ENCODE measurements at regions of chr4 and their contacts with region 1.

Region 1: GRCh38 chr4:40199999-40200874 is 3.4 kb downstream of the RHOH start:
- DNase-seq: peak; percentile 73
- H3K4me3 ChIP-seq: peak overlapping the region; percentile 78
- H3K27ac ChIP-seq: peak overlapping the region; percentile 97
- H3K4me1 ChIP-seq: peaks cover 50% of the 10 kb centered on the region
- H3K27me3 ChIP-seq: no peaks in the 10 kb centered on the region
- CTCF ChIP-seq: no peak

Region 2: DNA sequence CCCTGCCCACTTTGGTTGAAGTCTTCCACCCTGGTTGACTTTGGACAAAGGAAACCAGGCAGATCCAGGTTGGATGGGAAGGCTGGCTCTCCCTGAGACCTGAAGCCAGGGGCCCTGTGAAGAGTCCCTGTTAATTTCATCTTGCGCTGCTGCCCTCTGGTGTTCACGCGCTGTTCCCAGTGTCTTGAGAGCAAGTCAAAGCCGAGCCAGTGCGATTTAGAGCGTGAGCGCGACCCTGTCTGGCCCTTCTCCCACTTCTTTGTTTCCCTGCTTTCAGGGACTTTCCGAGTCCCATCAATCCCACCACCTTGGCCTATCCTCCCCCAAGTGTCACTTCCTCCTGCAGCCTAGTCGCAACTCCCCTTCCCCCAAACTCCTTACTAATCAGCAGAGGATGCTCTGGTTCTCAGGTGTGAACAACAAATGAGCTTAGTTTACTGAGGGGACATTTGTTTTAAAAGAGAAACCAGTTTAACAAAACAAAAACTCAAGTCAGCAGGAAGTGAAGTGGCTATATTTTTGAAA is 109.1 kb after region 1 on chr4:
- CTCF ChIA-PET with region 1: interaction called, 8 read pairs
- POLR2A ChIA-PET with region 1: no interaction called
- intact Hi-C with region 1: loop called (anchors 1 kb)
- DNase-seq: peak; percentile 94
- H3K4me3 ChIP-seq: peak overlapping the region; percentile 18
- H3K27ac ChIP-seq: no peak overlapping the region
- H3K4me1 ChIP-seq: peaks cover 21% of the 10 kb centered on the region
- H3K27me3 ChIP-seq: no peaks in the 10 kb centered on the region
- CTCF ChIP-seq: peak; percentile 91

Region 3: GRCh38 chr4:41060352-41061334 is 860.4 kb after region 1 on chr4:
- CTCF ChIA-PET with region 1: no interaction called
- POLR2A ChIA-PET with region 1: no interaction called
- intact Hi-C with region 1: no loop called
- DNase-seq: no peak
- H3K4me3 ChIP-seq: no peak overlapping the region
- H3K27ac ChIP-seq: no peak overlapping the region
- H3K4me1 ChIP-seq: no peaks in the 10 kb centered on the region
- H3K27me3 ChIP-seq: no peaks in the 10 kb centered on the region
- CTCF ChIP-seq: no peak